WTC11 (cell line): ENCODE measurements at regions of chr12 and their contacts with region 1.

Region 1: GRCh38 chr12:50314629-50315312 is 31.5 kb upstream of the LIMA1 start:
- DNase-seq: peak; percentile 16
- ATAC-seq: peak; percentile 74
- H3K4me3 Mint-ChIP-seq: no peak overlapping the region
- H3K27ac Mint-ChIP-seq: no peak overlapping the region; the same call in 1 of the 2 replicates
- H3K4me1 Mint-ChIP-seq: peaks cover 10% of the 10 kb centered on the region
- H3K27me3 Mint-ChIP-seq: no peaks in the 10 kb centered on the region
- CTCF ChIP-seq: peak; percentile 44; the same call in 1 of the 2 replicates

Region 2: GRCh38 chr12:50084775-50085614 is 229.8 kb before region 1 on chr12 and contains the start of gene SMARCD1:
- CTCF ChIA-PET with region 1: interaction called, 13 read pairs
- POLR2A ChIA-PET with region 1: no interaction called
- DNase-seq: peak; percentile 96
- ATAC-seq: peak; percentile 93
- H3K4me3 Mint-ChIP-seq: peak within 1 kb of the TSS; percentile 89
- H3K27ac Mint-ChIP-seq: peak within 1 kb of the TSS; percentile 94
- H3K4me1 Mint-ChIP-seq: peaks cover 24% of the 10 kb centered on the region
- H3K27me3 Mint-ChIP-seq: peaks cover 26% of the 10 kb centered on the region
- CTCF ChIP-seq: no peak
- total RNA-seq, gene SMARCD1: 150 to 165 TPM (median 152 TPM) in 3 replicates

Region 3: GRCh38 chr12:50103767-50104321 is 210.9 kb before region 1 on chr12 and contains the start of gene GPD1:
- CTCF ChIA-PET with region 1: interaction called, 61 read pairs
- POLR2A ChIA-PET with region 1: no interaction called
- DNase-seq: peak; percentile 48
- ATAC-seq: peak; percentile 77
- H3K4me3 Mint-ChIP-seq: no peak within 1 kb of the TSS
- H3K27ac Mint-ChIP-seq: peak within 1 kb of the TSS; percentile 82; the same call in 1 of the 2 replicates
- H3K4me1 Mint-ChIP-seq: peaks cover 30% of the 10 kb centered on the region
- H3K27me3 Mint-ChIP-seq: no peaks in the 10 kb centered on the region
- CTCF ChIP-seq: no peak
- total RNA-seq, gene GPD1: 0.39 to 0.77 TPM (median 0.62 TPM) in 3 replicates

Region 4: GRCh38 chr12:50167041-50167828 is 147.5 kb before region 1 on chr12 and contains the start of gene CERS5:
- CTCF ChIA-PET with region 1: interaction called, 16 read pairs
- POLR2A ChIA-PET with region 1: interaction called, 3 read pairs
- DNase-seq: peak; percentile 99
- ATAC-seq: peak; percentile 95
- H3K4me3 Mint-ChIP-seq: peak within 1 kb of the TSS; percentile 87
- H3K27ac Mint-ChIP-seq: peak within 1 kb of the TSS; percentile 100
- H3K4me1 Mint-ChIP-seq: peaks cover 30% of the 10 kb centered on the region
- H3K27me3 Mint-ChIP-seq: no peaks in the 10 kb centered on the region
- CTCF ChIP-seq: 0 out of 2 replicates have a peak, but pooled peaks have one; percentile 23
- total RNA-seq, gene CERS5: 47.8 to 55.8 TPM (median 51.7 TPM) in 3 replicates

Region 5: DNA sequence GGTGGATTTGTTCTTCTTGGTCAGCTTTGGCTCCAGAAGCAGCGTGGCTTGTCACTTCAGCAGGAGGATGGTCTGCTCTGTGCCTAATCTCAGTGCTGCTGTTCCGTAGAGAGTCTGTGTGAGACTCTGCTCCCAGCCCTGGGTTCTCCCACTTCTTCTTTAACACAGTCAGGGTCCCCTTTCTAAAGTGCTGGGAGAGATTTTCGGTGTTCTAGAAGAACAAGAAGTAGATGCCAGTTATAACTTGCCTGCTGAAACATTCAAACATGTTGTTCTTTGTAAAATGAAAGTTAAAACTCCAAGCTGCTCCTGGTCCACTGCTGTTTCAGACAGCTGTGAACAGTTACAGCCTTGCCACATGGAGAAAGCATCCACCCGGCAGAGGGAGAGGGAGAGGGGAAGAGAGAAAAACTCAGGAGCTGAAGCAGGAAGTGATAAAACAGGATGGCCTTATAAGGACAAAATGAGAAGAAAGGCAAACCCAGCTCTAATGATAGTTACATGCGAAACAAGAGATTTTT is 92.4 kb before region 1 on chr12:
- CTCF ChIA-PET with region 1: interaction called, 16 read pairs
- POLR2A ChIA-PET with region 1: no interaction called
- DNase-seq: peak; percentile 31
- ATAC-seq: peak; percentile 93
- H3K4me3 Mint-ChIP-seq: no peak overlapping the region
- H3K27ac Mint-ChIP-seq: no peak overlapping the region
- H3K4me1 Mint-ChIP-seq: peaks cover 20% of the 10 kb centered on the region
- H3K27me3 Mint-ChIP-seq: no peaks in the 10 kb centered on the region
- CTCF ChIP-seq: no peak

Region 6: GRCh38 chr12:50283229-50283923 is 31.4 kb before region 1 on chr12 and contains the start of gene LIMA1:
- CTCF ChIA-PET with region 1: interaction called, 22 read pairs
- POLR2A ChIA-PET with region 1: no interaction called
- DNase-seq: peak; percentile 96
- ATAC-seq: peak; percentile 99
- H3K4me3 Mint-ChIP-seq: peak within 1 kb of the TSS; percentile 70
- H3K27ac Mint-ChIP-seq: peak within 1 kb of the TSS; percentile 92
- H3K4me1 Mint-ChIP-seq: peaks cover 11% of the 10 kb centered on the region
- H3K27me3 Mint-ChIP-seq: peaks cover 8% of the 10 kb centered on the region
- CTCF ChIP-seq: no peak
- total RNA-seq, gene LIMA1: 30.8 to 41.2 TPM (median 31.2 TPM) in 3 replicates

Region 7: GRCh38 chr12:50333441-50333840 is 18.7 kb after region 1 on chr12:
- CTCF ChIA-PET with region 1: interaction called, 18 read pairs
- POLR2A ChIA-PET with region 1: no interaction called
- DNase-seq: no peak
- ATAC-seq: no peak
- H3K4me3 Mint-ChIP-seq: no peak overlapping the region
- H3K27ac Mint-ChIP-seq: no peak overlapping the region
- H3K4me1 Mint-ChIP-seq: peaks cover 4% of the 10 kb centered on the region; the same call in 1 of the 2 replicates
- H3K27me3 Mint-ChIP-seq: no peaks in the 10 kb centered on the region; the same call in 1 of the 2 replicates
- CTCF ChIP-seq: no peak

Region 8: GRCh38 chr12:50589650-50590435 is 275.1 kb after region 1 on chr12:
- CTCF ChIA-PET with region 1: no interaction called
- POLR2A ChIA-PET with region 1: no interaction called
- DNase-seq: no peak
- ATAC-seq: no peak
- H3K4me3 Mint-ChIP-seq: no peak overlapping the region
- H3K27ac Mint-ChIP-seq: peak overlapping the region; percentile 52
- H3K4me1 Mint-ChIP-seq: peaks cover 9% of the 10 kb centered on the region
- H3K27me3 Mint-ChIP-seq: no peaks in the 10 kb centered on the region
- CTCF ChIP-seq: no peak